ENCODE measurements at regions of chr5 and their contacts with region 1.

Region 1: DNA sequence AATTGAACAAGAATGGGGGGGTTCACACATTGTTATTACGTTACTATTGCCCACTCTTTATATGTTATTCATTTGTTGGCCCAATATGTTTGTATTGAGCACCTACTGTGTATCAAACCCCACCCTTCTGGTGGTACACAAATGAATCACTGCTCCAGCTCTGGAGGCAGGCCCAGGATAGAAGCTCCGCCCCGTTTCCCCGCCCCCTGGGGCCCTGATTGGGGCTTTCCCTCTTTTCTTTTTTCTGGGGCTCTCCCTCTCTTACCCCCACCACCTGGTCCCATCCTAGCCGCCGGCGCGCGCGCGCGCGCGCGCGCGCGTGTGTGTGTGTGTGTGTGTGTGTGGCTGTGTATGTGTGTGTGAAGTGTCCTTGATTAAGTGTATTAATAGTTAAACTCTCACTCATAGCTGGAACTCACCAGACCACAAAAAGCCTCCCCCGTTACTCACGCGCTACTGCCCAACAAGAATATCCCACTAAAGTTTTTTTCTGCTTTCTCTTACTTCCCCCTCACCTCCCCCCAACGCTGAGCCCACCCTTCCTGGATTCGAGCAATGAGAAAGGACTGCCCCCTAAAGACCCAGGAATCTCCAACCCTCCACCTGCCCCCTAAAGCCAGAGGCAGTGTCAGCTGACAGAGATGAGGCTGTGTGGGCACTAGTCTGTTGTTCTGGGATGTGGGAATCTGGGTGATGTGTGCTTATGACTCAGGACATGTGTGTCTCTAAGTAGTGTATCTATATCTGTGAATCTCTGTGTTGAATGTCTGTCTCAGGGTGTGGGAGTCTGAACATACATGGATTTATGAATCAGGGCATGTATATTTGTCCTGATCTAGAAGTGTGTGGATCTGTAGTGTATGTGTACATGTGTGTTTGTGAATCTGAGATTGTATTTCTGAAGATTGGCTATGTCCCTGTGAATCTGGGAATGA is 4.0 kb downstream of the CXXC5 start:
- DNase-seq: peak; percentile 92
- H3K4me3 ChIP-seq: peak overlapping the region; percentile 90
- H3K27ac ChIP-seq: peak overlapping the region; percentile 58
- H3K4me1 ChIP-seq: peaks cover 63% of the 10 kb centered on the region
- H3K27me3 ChIP-seq: no peaks in the 10 kb centered on the region
- CTCF ChIP-seq: no peak

Region 2: DNA sequence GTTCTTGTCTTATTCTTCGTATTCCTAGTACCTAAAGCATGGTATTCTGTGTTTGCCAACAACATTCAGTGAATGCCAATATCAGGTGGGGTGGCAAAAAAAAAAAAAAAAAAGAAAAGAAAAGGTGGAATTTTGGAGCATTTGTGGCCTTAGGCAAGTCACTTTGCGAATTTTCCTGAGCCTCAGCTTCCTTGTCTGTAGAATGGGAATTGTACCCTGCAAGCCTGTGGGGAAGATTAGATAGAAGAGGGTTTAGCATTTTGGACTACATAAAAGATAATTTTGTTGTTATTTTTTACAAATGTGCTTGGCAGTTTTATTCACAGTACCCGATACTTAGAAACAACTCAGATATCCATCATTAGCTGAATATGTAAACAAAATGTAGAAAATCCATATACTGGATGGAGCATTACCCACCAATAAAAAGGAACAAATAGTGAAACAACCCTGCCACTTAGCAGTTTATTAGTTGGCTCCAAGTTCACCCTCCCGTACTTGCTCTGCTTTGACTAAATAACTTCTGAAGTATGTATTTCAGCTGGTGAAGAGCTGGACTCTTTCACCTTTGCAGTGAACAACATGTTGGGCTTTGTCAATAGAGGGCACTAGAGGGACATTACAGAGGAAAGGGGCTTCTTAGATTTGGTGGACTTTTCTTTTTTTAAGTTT is 77.3 kb before region 1 on chr5:
- CTCF ChIA-PET with region 1: interaction called, 11 read pairs
- POLR2A ChIA-PET with region 1: no interaction called
- intact Hi-C with region 1: no loop called
- DNase-seq: peak; percentile 57
- H3K4me3 ChIP-seq: no peak overlapping the region
- H3K27ac ChIP-seq: no peak overlapping the region
- H3K4me1 ChIP-seq: peaks cover 11% of the 10 kb centered on the region
- H3K27me3 ChIP-seq: no peaks in the 10 kb centered on the region
- CTCF ChIP-seq: peak; percentile 78

Region 3: GRCh38 chr5:139696894-139697658 is 45.0 kb after region 1 on chr5:
- CTCF ChIA-PET with region 1: no interaction called
- POLR2A ChIA-PET with region 1: no interaction called
- intact Hi-C with region 1: loop called (anchors 5 kb)
- DNase-seq: peak; percentile 86
- H3K4me3 ChIP-seq: peak overlapping the region; percentile 43
- H3K27ac ChIP-seq: peak overlapping the region; percentile 89
- H3K4me1 ChIP-seq: peaks cover 45% of the 10 kb centered on the region
- H3K27me3 ChIP-seq: no peaks in the 10 kb centered on the region
- CTCF ChIP-seq: no peak

Region 4: GRCh38 chr5:139745800-139746690 is 93.9 kb after region 1 on chr5:
- CTCF ChIA-PET with region 1: no interaction called
- POLR2A ChIA-PET with region 1: interaction called, 3 read pairs
- intact Hi-C with region 1: loop called (anchors 5 kb)
- DNase-seq: peak; percentile 98
- H3K4me3 ChIP-seq: peak overlapping the region; percentile 43
- H3K27ac ChIP-seq: peak overlapping the region; percentile 80
- H3K4me1 ChIP-seq: peaks cover 43% of the 10 kb centered on the region
- H3K27me3 ChIP-seq: no peaks in the 10 kb centered on the region
- CTCF ChIP-seq: no peak

Region 5: DNA sequence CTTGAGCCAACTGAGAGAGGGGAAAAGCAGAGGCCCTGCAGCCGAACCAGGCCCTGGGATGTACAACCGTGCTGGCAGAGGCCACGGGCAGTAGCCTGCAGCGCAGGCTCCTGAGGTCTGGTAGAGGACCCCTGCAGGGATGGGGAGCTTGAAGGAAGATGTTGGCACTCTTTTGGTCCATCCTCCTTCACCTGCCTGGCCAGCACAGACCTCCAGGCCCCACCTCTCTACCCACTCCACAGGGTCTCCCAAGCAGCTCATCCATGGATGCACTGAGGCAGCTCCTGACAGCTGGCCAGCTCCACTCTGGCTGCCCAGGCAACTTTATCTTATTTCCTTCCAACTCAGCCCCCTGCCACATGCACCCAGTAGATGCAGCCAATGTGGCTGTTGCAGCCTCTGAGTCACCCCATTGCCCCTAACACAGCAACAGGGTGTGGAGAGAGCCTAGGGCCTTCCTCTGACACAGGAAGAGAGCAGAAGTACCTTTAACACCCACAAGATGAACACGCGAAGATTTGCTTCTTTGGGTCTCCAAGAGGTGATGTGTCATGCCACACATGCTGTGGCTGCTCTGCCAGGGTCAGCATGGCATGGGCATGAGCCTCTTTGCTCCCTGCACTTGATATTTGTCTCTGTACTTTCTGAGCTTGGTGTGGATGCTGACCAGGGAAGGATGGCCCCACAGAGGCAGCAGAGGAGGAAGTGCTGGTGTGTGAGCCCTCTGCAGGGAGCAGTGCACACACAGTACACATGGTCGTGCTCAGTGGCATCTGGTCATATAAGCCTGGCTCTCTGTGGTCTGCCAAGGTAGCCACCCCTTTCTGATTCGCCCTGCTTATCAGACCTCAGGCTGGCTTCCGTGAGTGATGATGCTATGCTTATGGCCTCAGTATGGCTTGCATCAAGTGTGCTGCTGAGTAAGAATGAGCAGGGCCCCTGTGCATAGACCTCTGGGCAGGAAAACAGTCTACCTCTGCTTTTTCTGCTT is 273.8 kb after region 1 on chr5:
- CTCF ChIA-PET with region 1: interaction called, 10 read pairs
- POLR2A ChIA-PET with region 1: no interaction called
- intact Hi-C with region 1: no loop called
- DNase-seq: no peak
- H3K4me3 ChIP-seq: no peak overlapping the region
- H3K27ac ChIP-seq: no peak overlapping the region
- H3K4me1 ChIP-seq: no peaks in the 10 kb centered on the region
- H3K27me3 ChIP-seq: peaks cover 28% of the 10 kb centered on the region
- CTCF ChIP-seq: no peak